ENCODE measurements at regions of chr17 and their contacts with region 1.

Region 1: DNA sequence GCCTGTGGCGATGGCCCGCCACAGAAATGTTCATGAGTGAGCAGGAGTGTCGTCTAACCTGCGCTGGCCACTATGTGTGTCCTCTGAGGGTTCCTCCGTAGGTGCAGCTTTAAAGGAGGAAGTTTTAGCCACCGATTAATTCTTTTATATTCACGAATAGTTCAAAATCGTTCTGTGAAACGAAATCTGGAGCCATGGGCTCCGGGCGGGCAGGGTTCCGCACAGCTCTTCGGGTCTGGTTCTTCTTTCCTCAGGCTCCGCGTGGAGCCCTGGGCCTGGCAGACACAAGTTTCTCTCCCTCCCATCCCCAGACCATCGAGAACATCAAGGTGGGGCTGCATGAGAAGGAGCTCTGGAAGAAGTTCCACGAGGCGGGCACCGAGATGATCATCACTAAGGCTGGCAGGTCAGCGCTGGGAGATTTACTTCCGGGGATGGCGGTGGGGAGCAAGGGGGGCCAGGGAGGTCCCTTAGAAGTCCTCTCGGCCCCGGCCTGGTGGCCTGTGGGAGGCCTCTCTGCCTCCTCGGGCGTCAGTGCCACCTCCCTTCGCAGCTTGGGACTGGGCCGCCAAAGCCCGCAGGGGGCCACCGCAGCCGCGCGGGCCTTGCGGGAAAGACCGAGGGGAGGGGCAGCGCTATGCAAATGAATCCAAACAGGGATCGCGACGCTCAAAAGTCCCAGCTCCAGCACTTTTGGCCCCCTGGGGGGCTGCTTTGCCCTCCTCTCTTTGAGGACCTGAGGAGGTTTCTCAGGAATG is 5.2 kb downstream of the TBX4 start:
- DNase-seq: no peak
- ATAC-seq: peak in 1 of 2 donors; percentile 22

Region 2: DNA sequence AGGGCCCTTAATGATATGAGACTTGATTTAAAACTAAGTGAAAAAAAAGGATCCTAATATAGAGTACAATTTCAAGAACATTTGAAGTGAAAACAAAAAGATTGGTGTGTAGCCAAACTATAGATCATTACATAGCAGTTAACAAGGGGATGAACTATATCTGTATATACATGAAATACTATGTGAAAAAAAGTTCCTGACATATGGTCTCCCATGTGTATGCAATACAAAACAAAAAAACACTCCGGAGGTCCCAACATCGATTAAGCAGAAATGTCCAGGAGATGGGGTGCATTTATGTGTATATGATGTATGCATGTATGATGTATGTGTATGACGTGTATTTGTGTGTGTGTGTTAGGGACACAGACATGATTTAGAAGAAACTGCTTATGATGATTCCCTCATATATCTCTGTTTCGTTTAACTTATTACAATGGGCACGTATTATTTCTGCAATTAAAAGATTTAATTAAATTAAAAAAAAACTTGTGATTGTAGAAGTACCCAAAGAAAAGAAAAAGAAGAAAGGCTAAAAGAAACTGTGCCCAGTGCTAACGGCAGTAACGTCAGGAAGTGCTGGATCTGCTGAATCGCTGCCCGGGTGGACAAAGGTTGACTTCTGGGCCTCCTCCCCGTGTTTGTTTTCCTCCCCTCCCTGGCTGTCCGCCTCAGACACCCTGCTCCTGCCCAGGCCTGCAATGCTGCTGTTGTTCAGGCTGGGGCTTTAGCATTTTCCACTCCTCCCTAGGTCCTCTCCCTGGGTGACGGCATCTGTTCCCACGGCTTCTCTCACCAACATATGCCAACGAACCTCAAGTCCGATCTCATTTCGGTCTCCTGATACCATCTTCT is 31.7 kb after region 1 on chr17:
- intact Hi-C with region 1: loop called in 1 of 2 experiments (anchors 2 kb)
- DNase-seq: no peak
- ATAC-seq: no peak

Region 3: DNA sequence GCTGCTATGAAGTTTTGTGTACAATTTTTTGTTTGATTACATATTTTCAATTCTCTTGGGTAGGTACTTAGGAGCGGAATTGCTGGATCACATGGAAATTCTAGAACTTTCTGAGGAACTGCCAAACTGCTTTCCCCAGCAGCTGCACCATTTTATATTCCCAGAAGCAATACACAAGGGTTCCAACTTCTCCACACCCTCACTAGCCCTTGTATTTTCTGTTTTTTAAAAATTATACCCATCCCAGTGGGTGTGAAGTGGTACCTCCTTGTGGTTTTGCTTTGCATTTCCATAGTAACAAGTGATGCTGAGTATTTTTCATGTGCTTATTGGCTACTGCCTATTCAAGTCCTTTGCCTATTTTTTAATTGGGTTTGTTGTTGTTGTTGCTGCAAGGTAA is 112.7 kb after region 1 on chr17:
- intact Hi-C with region 1: no loop called
- DNase-seq: no peak
- ATAC-seq: no peak

Measured in left cardiac atrium (tissue), 4 donors.